Adrenal gland (tissue), 19 donors: ENCODE measurements at regions of chr21 and their contacts with region 1.

Region 1: GRCh38 chr21:36419996-36420395 is 34.8 kb downstream of the CHAF1B start:
- DNase-seq: peak; percentile 75 to 92 (median 89)
- H3K4me3 ChIP-seq: no peak overlapping the region
- H3K27ac ChIP-seq: no peak overlapping the region
- H3K4me1 ChIP-seq: no peaks in the 10 kb centered on the region
- H3K27me3 ChIP-seq: no peaks in the 10 kb centered on the region
- CTCF ChIP-seq: peak; percentile 68 to 87 (median 80)
- POLR2A ChIP-seq: no peak

Region 2: DNA sequence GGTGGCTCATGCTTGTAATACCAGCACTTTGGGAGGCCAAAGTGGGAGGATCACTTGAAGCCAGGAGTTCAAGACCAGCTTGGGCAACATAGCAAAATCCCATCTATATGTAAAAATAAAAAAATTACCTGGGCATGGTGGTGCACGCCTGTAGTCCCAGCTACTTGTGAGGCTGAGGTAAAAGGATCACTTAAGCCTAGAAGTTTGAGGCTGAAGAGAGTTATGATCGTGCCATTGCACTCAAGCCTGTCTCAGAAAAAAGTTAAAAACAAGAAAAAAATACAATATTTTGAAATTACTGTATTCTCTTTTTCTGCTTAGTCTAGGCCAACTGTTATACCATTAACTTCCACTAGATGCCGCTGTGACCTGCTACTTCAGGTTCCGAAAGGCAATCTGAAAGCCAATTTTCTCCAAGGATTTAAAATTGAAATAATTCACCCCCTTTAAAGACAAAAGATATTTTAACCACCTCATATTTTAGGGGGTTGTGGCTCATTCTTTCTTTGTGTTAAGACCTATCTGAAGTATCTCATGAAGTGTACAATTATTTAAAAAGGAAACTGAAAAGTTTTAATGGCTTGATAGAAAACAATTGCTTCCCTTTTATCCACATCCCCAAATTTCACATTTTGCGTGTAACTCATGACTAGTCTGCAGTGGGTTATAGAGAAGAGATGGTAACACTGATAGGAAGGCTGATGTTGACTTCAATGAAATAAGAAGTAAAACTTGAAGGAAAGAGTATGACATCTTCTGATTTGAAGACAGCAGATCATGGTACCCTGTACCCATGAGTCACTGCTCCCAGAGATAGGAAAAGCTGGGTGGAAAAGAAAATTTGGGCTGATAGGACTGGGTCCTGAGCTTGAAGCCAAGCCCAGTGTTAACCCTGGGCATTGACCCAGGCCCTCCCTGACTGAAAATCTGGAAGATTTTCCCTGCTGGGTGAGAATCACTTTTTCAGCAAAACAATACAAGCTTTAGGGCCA is 84.4 kb after region 1 on chr21:
- intact Hi-C with region 1: loop called in 1 of 2 experiments (anchors 5 kb)
- DNase-seq: peak in 5 of 7 donors; percentile 25 to 57 (median 55)
- H3K4me3 ChIP-seq: no peak overlapping the region
- H3K27ac ChIP-seq: no peak overlapping the region
- H3K4me1 ChIP-seq: no peaks in the 10 kb centered on the region
- H3K27me3 ChIP-seq: peaks cover 6% of the 10 kb centered on the region
- CTCF ChIP-seq: peak; percentile 82 to 98 (median 84)
- POLR2A ChIP-seq: no peak

Region 3: GRCh38 chr21:36589355-36589971 is 169.5 kb after region 1 on chr21:
- intact Hi-C with region 1: loop called in 1 of 2 experiments (anchors 5 kb)
- DNase-seq: peak; percentile 52 to 73 (median 68)
- H3K4me3 ChIP-seq: no peak overlapping the region
- H3K27ac ChIP-seq: no peak overlapping the region
- H3K4me1 ChIP-seq: peaks cover 0 to 3% of the 10 kb centered on the region in 2 donors
- H3K27me3 ChIP-seq: no peaks in the 10 kb centered on the region
- CTCF ChIP-seq: peak; percentile 35 to 55 (median 48)
- POLR2A ChIP-seq: no peak